ENCODE measurements at regions of chr2 and their contacts with region 1.

Region 1: DNA sequence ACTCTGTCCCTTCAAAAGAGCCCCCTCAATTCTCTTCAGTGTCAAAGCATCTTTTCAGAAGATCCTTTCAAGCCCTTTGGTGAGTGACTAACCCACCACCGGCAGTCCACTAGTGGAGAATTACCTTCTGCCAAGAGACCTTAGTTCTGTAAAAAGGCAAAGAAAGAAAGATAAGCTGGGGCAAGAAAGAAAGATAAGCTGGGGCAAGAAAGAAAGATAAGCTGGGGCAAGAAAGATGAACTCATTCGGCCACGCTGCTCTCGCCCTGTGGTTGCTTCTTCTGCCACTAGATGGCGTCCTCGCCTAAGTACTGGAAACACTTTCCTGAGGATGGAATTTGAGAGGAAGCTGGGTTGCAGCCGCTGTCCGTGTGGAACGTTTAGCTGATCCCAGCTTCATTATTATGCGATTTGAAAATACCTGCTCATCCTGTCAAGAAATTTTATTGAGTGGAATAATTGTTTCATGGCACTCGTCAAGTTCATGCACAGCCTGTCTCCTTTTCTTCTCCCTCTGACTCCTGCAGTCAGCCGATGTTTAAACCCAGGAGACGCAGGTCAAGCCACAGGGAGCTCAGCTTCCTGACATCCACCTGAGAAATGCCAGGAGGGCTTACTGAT is 17.3 kb upstream of the ANXA4 start:
- DNase-seq: peak; percentile 72
- ATAC-seq: peak; percentile 96
- H3K4me3 ChIP-seq: peak overlapping the region; percentile 26 to 46
- H3K27ac ChIP-seq: peak overlapping the region; percentile 64; the same call in 1 of the 2 replicates
- H3K4me1 ChIP-seq: peaks cover 19% of the 10 kb centered on the region
- H3K27me3 ChIP-seq: no peaks in the 10 kb centered on the region
- CTCF ChIP-seq: peak; percentile 95

Region 2: GRCh38 chr2:69559442-69560146 is 165.1 kb before region 1 on chr2:
- CTCF ChIA-PET with region 1: no interaction called
- POLR2A ChIA-PET with region 1: no interaction called
- in situ Hi-C with region 1: no loop called
- intact Hi-C with region 1: loop called (anchors 5 kb)
- DNase-seq: peak; percentile 67
- ATAC-seq: peak; percentile 92
- H3K4me3 ChIP-seq: no peak overlapping the region
- H3K27ac ChIP-seq: peak overlapping the region; percentile 29; the same call in 1 of the 2 replicates
- H3K4me1 ChIP-seq: peaks cover 19% of the 10 kb centered on the region
- H3K27me3 ChIP-seq: no peaks in the 10 kb centered on the region
- CTCF ChIP-seq: peak; percentile 81

Region 3: GRCh38 chr2:69575926-69576325 is 148.7 kb before region 1 on chr2:
- CTCF ChIA-PET with region 1: no interaction called
- POLR2A ChIA-PET with region 1: no interaction called
- in situ Hi-C with region 1: no loop called
- intact Hi-C with region 1: no loop called
- DNase-seq: no peak
- ATAC-seq: no peak
- H3K4me3 ChIP-seq: no peak overlapping the region
- H3K27ac ChIP-seq: no peak overlapping the region
- H3K4me1 ChIP-seq: peaks cover 14% of the 10 kb centered on the region
- H3K27me3 ChIP-seq: no peaks in the 10 kb centered on the region
- CTCF ChIP-seq: no peak

Region 4: DNA sequence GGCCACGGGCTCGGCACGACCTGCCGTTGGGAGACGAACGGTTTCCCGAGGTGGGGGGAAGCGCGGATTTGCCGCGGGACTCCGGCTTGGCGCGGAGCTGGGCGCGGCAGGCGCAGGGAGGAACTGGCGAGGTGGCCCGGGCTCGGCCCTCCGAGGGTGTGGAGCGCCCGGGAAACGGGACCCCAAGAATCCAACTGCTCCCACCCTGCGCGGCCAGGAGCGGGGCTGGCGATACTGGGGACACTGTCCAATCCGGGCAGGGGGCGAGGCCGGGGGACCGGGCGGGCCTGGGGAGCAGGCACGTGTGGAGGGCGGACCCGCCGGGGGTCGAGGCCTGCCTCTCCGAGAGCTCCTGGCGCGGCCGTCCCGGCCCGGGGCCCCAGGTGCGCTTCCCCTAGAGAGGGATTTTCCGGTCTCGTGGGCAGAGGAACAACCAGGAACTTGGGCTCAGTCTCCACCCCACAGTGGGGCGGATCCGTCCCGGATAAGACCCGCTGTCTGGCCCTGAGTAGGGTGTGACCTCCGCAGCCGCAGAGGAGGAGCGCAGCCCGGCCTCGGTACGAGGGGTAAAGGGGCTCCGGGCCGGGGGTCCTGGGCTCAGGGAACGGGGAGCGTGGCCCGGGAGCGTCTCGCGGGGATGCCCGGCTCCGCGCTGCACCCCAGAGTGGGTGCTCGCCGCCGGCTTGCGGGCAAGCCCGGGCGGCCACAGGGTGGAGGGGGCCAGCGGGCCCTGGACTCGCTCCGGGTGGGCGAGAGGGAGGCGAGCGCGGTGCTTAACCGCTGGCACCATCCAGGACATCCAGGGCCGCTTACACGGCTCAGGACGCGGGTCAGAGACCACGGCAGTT is 17.2 kb after region 1 on chr2 and contains the start of gene ANXA4:
- CTCF ChIA-PET with region 1: interaction called, 13 read pairs
- POLR2A ChIA-PET with region 1: interaction called, 5 read pairs
- in situ Hi-C with region 1: no loop called
- intact Hi-C with region 1: no loop called
- DNase-seq: peak; percentile 41
- ATAC-seq: peak; percentile 98
- H3K4me3 ChIP-seq: peak within 1 kb of the TSS; percentile 82 to 95
- H3K27ac ChIP-seq: peak within 1 kb of the TSS; percentile 98
- H3K4me1 ChIP-seq: peaks cover 29% of the 10 kb centered on the region
- H3K27me3 ChIP-seq: no peaks in the 10 kb centered on the region
- CTCF ChIP-seq: no peak
- total RNA-seq, gene ANXA4: 183 TPM

Region 5: DNA sequence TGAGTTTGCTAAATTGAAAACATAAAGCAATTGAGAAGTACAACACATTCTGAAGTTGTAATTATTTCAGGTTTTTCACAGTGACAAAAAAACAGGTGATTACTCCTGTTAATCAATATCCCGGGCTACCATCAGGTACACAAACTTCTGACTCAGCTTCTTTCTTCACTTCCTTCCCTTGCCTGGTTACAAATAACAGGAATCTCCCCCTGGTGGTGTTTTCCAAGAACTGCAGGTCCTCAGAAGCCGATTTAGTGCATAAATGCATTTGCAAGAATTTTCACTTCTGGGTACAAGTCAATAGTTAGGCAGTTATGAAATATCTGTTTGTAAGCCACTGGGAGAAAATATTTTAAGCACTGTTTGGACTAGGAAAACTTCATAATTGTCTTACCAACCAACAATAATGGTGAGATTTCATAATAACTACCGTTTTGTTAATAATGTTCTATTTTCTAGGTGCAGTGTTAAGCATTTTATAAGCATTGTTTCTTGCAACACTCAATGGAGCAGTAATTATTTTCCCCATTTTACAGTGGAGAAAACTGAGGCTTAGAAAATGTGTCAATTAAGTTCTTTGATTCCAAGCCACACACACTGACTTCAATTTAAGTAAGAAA is 92.4 kb after region 1 on chr2:
- CTCF ChIA-PET with region 1: interaction called, 89 read pairs
- POLR2A ChIA-PET with region 1: interaction called, 5 read pairs
- in situ Hi-C with region 1: no loop called
- intact Hi-C with region 1: loop called (anchors 1 kb)
- DNase-seq: peak; percentile 75
- ATAC-seq: peak; percentile 85; the same call in 1 of the 2 replicates
- H3K4me3 ChIP-seq: no peak overlapping the region
- H3K27ac ChIP-seq: no peak overlapping the region
- H3K4me1 ChIP-seq: no peaks in the 10 kb centered on the region
- H3K27me3 ChIP-seq: no peaks in the 10 kb centered on the region
- CTCF ChIP-seq: peak; percentile 81; the same call in 1 of the 2 replicates

Region 6: GRCh38 chr2:69893684-69894551 is 169.3 kb after region 1 on chr2 and contains the start of gene SNRNP27:
- CTCF ChIA-PET with region 1: interaction called, 5 read pairs
- POLR2A ChIA-PET with region 1: no interaction called
- in situ Hi-C with region 1: no loop called
- intact Hi-C with region 1: loop called (anchors 10 kb)
- DNase-seq: peak; percentile 61
- ATAC-seq: peak; percentile 95
- H3K4me3 ChIP-seq: peak within 1 kb of the TSS; percentile 85 to 88
- H3K27ac ChIP-seq: peak within 1 kb of the TSS; percentile 93
- H3K4me1 ChIP-seq: peaks cover 10% of the 10 kb centered on the region; the same call in 1 of the 2 replicates
- H3K27me3 ChIP-seq: no peaks in the 10 kb centered on the region
- CTCF ChIP-seq: no peak
- total RNA-seq, gene SNRNP27: 39.7 TPM